ENCODE measurements at regions of chr4 and their contacts with region 1.

Region 1: DNA sequence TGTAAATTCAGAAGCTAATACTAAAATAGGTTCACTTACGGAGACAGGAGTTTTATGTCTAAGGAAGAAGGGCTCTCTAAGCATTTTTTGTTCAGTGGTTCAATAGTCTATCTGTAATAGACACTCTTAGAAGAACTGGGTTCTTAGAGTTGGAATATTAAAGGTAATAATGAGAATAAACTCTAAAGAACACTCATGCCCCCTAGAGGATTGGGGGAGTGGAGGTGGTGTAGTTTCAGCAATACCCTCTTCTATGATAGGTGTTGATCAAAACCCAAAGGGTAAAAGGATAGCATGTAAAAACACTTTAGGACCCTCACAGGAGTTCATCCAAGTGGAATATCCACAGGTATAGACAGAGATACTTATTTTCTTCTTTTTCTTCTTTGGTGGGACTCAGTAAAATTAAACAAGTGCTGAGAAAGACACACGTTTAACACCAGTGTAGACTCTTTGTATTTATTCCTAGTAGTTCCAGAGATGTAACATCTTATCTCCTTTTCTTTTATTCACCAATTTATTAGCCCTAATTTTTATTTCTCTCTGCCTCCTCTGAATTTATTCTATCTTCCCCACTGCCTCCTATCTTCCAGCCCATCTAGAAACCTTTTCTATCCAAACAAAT is 25.7 kb upstream of the MND1 start:
- DNase-seq: peak in 6 of 9 donors; percentile 11 to 56 (median 44)
- ATAC-seq: peak; percentile 54
- H3K4me3 ChIP-seq: no peak overlapping the region
- H3K4me3 Mint-ChIP-seq: no peak overlapping the region
- H3K27ac ChIP-seq: no peak overlapping the region
- H3K27ac Mint-ChIP-seq: no peak overlapping the region
- H3K4me1 ChIP-seq: no peaks in the 10 kb centered on the region
- H3K4me1 Mint-ChIP-seq: no peaks in the 10 kb centered on the region
- H3K27me3 ChIP-seq: no peaks in the 10 kb centered on the region
- H3K27me3 Mint-ChIP-seq: no peaks in the 10 kb centered on the region

Region 2: GRCh38 chr4:152850377-152850776 is 468.4 kb before region 1 on chr4:
- CTCF ChIA-PET with region 1: no interaction called
- POLR2A ChIA-PET with region 1: no interaction called
- intact Hi-C with region 1: loop called (anchors 1 to 2 kb)
- DNase-seq: peak in 4 of 9 donors; percentile 2 to 20 (median 11)
- ATAC-seq: peak; percentile 78
- H3K4me3 ChIP-seq: no peak overlapping the region
- H3K4me3 Mint-ChIP-seq: peak overlapping the region in 5 of 10 donors; percentile 9 to 40 (median 34)
- H3K27ac ChIP-seq: no peak overlapping the region
- H3K27ac Mint-ChIP-seq: peak overlapping the region in 4 of 9 donors; percentile 9 to 55 (median 36)
- H3K4me1 ChIP-seq: peaks cover 0 to 11% of the 10 kb centered on the region in 2 donors
- H3K4me1 Mint-ChIP-seq: peaks cover 13 to 26% (median 21%) of the 10 kb centered on the region in 7 donors
- H3K27me3 ChIP-seq: no peaks in the 10 kb centered on the region
- H3K27me3 Mint-ChIP-seq: no peaks in the 10 kb centered on the region

Region 3: DNA sequence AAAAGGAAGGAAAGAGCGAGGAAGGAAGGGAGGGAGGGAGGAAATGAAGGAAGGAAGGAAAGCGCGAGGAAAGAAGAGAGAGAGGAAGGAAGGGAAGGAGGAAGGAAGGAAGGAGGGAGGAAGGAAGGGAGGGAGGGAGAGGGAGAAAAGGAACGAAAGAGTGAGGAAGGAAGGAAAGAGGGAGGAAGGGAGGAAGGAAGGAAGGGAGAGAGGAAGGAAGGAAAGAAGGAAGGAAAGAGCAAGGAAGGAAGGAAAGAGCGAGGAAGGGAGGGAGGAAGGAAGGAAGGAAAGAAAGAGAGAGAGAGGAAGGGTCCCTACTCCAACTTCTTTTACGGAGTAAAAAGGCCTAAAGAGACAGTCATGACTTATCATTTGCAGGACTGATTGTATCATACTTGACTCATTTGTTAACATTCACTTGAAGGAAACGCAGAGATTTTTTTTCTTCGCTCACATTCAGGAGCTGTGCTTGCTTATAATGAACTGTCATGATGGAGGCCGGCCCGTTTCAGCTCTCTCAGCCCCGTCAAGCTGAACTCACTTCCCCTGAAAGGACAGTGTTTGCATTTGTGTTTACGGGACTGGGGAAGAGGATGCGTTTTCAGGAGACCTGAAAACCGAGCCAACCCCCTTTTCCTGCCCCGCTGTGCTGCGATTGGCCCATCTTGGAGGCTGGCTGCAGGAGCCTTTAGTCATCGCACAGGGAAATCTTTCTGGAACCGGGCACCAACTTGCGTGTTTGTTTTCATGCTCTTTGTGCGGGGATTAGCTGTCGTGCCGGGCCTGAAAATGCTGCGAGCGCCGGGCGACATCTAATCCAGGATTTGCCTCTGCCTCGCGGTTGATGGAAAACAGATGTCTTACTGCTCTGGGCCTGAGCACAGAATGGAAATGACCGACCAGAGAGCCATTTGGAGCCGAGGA is 96.8 kb before region 1 on chr4:
- CTCF ChIA-PET with region 1: interaction called, 3 read pairs
- POLR2A ChIA-PET with region 1: no interaction called
- intact Hi-C with region 1: loop called in 1 of 2 experiments (anchors 5 kb)
- DNase-seq: peak in 8 of 9 donors; percentile 19 to 42 (median 31)
- ATAC-seq: peak; percentile 65
- H3K4me3 ChIP-seq: peak overlapping the region; percentile 62
- H3K4me3 Mint-ChIP-seq: peak overlapping the region; percentile 86 to 96 (median 92)
- H3K27ac ChIP-seq: peak overlapping the region; percentile 60
- H3K27ac Mint-ChIP-seq: peak overlapping the region in 8 of 9 donors; percentile 42 to 88 (median 76)
- H3K4me1 ChIP-seq: peaks cover 0 to 24% of the 10 kb centered on the region in 2 donors
- H3K4me1 Mint-ChIP-seq: peaks cover 23 to 48% (median 42%) of the 10 kb centered on the region in 7 donors
- H3K27me3 ChIP-seq: no peaks in the 10 kb centered on the region
- H3K27me3 Mint-ChIP-seq: peaks cover 0 to 66% (median 3%) of the 10 kb centered on the region in 5 donors

Region 4: DNA sequence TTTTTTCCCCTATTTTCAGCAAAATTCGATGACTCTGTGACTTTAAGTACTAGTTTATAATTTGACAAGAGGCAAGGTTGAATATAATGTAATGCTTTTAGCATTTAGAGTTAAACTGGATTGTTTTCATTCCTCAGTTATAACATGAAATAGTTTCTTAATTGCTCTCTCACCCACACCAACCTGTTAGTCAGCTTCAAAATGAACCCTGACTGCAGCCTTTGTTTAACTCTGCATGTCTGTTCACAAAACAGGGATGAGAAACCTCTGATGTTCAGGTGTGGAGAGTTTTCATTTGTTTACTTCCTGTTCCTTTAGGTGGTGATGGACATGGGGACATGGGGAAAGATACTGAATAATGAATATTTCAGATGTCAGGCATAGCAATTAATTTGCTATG is 24.2 kb before region 1 on chr4:
- CTCF ChIA-PET with region 1: no interaction called
- POLR2A ChIA-PET with region 1: no interaction called
- intact Hi-C with region 1: no loop called
- DNase-seq: no peak
- ATAC-seq: no peak
- H3K4me3 ChIP-seq: no peak overlapping the region
- H3K4me3 Mint-ChIP-seq: no peak overlapping the region
- H3K27ac ChIP-seq: no peak overlapping the region
- H3K27ac Mint-ChIP-seq: no peak overlapping the region
- H3K4me1 ChIP-seq: no peaks in the 10 kb centered on the region
- H3K4me1 Mint-ChIP-seq: peaks cover 3 to 5% (median 5%) of the 10 kb centered on the region in 7 donors
- H3K27me3 ChIP-seq: no peaks in the 10 kb centered on the region
- H3K27me3 Mint-ChIP-seq: peaks cover 0 to 5% (median 0%) of the 10 kb centered on the region in 5 donors

Region 5: GRCh38 chr4:153464068-153464467 is 145.3 kb after region 1 on chr4:
- CTCF ChIA-PET with region 1: no interaction called
- POLR2A ChIA-PET with region 1: no interaction called
- intact Hi-C with region 1: no loop called
- DNase-seq: no peak
- ATAC-seq: no peak
- H3K4me3 ChIP-seq: no peak overlapping the region
- H3K4me3 Mint-ChIP-seq: no peak overlapping the region
- H3K27ac ChIP-seq: peak overlapping the region; percentile 15
- H3K27ac Mint-ChIP-seq: peak overlapping the region in 6 of 9 donors; percentile 10 to 89 (median 58)
- H3K4me1 ChIP-seq: peaks cover 8 to 11% of the 10 kb centered on the region in 2 donors
- H3K4me1 Mint-ChIP-seq: peaks cover 17 to 39% (median 28%) of the 10 kb centered on the region in 7 donors
- H3K27me3 ChIP-seq: no peaks in the 10 kb centered on the region
- H3K27me3 Mint-ChIP-seq: no peaks in the 10 kb centered on the region

Measured in naive thymus-derived CD4-positive, alpha-beta T cell (primary cell).